B cell (primary cell): ENCODE measurements at regions of chr20 and their contacts with region 1.

Region 1: DNA sequence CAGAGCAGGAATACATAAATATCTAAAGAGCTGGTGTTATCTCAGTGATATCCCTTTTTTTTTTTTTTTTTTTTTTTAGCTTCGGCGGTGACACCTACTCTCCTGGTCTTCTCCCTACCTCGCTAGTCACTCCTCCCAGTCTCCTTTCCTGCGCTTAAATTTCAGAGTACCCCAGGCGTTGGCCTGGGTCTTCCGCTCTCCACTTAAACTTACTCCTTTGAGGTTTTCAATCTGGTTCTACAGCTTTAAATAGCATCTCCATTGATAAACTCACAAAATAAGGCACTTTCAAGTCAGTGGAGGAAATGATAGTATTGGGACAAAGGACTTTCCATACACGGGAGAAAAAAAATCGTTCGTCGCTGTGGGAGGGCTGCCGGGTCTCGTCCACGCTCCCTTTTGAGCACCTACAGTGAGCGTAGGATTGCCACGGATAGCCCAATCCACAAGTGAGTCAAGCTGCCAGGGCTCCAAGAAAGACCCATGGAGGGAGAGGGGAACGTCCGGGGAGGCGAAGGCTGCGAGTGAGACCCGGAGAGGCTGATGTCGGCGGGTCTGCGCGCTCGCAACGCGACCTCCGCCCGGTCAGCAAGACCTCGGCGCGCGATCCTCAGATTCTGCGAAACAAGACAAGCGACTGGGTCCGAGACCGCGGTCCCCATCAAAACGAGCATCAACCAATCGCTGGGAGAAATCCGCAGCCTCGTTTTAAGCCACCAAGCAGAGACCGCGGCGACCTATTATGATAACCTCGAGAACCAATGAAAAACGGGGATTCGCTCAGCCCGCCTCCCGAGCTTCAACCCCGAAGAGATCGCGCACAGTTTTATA is 672 bp upstream of the SRSF6 start:
- DNase-seq: peak; percentile 94
- ATAC-seq: peak; percentile 78
- H3K4me3 ChIP-seq: peak overlapping the region; percentile 84 to 98 (median 95)
- H3K4me3 Mint-ChIP-seq: peak overlapping the region; percentile 89
- H3K27ac ChIP-seq: peak overlapping the region; percentile 99 to 100
- H3K27ac Mint-ChIP-seq: peak overlapping the region; percentile 96
- H3K4me1 ChIP-seq: peaks cover 11 to 13% of the 10 kb centered on the region in 2 donors
- H3K4me1 Mint-ChIP-seq: peaks cover 27% of the 10 kb centered on the region
- H3K27me3 ChIP-seq: no peaks in the 10 kb centered on the region
- H3K27me3 Mint-ChIP-seq: peaks cover 12% of the 10 kb centered on the region
- CTCF ChIP-seq: no peak

Region 2: GRCh38 chr20:41617931-41618806 is 1838.9 kb before region 1 on chr20 and contains the start of gene CHD6:
- CTCF ChIA-PET with region 1: no interaction called
- POLR2A ChIA-PET with region 1: no interaction called
- intact Hi-C with region 1: loop called (anchors 5 kb)
- DNase-seq: peak; percentile 99
- ATAC-seq: peak; percentile 93
- H3K4me3 ChIP-seq: peak within 1 kb of the TSS; percentile 52 to 92 (median 72)
- H3K4me3 Mint-ChIP-seq: peak within 1 kb of the TSS; percentile 98
- H3K27ac ChIP-seq: peak within 1 kb of the TSS in 1 of 2 donors; percentile 57
- H3K27ac Mint-ChIP-seq: peak within 1 kb of the TSS; percentile 94
- H3K4me1 ChIP-seq: peaks cover 19 to 22% of the 10 kb centered on the region in 2 donors
- H3K4me1 Mint-ChIP-seq: peaks cover 42% of the 10 kb centered on the region
- H3K27me3 ChIP-seq: no peaks in the 10 kb centered on the region
- H3K27me3 Mint-ChIP-seq: no peaks in the 10 kb centered on the region
- CTCF ChIP-seq: no peak
- total RNA-seq, gene CHD6: 117 and 125 TPM in 2 replicates

Region 3: DNA sequence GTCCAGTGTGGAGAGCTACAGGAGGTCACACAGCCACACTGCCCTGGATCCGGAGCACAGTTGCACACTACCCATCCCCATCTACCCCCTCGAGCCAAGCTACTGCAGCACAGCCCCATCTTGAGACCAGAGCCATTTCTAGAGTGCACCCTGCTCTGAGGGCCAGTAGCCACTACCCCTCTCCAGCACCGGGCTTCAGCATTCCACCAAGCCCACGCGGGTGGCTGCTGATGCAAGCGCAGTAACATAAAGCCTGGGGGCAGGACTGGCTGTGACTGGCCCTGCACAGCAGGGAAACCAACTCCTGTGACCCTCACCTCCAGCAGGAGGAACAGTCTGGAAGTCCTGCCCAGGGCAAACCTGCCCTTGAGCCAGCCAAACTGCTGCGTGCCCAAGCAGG is 40.9 kb before region 1 on chr20:
- CTCF ChIA-PET with region 1: no interaction called
- POLR2A ChIA-PET with region 1: no interaction called
- intact Hi-C with region 1: no loop called
- DNase-seq: no peak
- ATAC-seq: no peak
- H3K4me3 ChIP-seq: no peak overlapping the region
- H3K4me3 Mint-ChIP-seq: no peak overlapping the region
- H3K27ac ChIP-seq: no peak overlapping the region
- H3K27ac Mint-ChIP-seq: no peak overlapping the region
- H3K4me1 ChIP-seq: no peaks in the 10 kb centered on the region
- H3K4me1 Mint-ChIP-seq: no peaks in the 10 kb centered on the region
- H3K27me3 ChIP-seq: peaks cover 0 to under 1% (median 0%) of the 10 kb centered on the region in 4 experiments
- H3K27me3 Mint-ChIP-seq: peaks cover 2% of the 10 kb centered on the region
- CTCF ChIP-seq: no peak

Region 4: DNA sequence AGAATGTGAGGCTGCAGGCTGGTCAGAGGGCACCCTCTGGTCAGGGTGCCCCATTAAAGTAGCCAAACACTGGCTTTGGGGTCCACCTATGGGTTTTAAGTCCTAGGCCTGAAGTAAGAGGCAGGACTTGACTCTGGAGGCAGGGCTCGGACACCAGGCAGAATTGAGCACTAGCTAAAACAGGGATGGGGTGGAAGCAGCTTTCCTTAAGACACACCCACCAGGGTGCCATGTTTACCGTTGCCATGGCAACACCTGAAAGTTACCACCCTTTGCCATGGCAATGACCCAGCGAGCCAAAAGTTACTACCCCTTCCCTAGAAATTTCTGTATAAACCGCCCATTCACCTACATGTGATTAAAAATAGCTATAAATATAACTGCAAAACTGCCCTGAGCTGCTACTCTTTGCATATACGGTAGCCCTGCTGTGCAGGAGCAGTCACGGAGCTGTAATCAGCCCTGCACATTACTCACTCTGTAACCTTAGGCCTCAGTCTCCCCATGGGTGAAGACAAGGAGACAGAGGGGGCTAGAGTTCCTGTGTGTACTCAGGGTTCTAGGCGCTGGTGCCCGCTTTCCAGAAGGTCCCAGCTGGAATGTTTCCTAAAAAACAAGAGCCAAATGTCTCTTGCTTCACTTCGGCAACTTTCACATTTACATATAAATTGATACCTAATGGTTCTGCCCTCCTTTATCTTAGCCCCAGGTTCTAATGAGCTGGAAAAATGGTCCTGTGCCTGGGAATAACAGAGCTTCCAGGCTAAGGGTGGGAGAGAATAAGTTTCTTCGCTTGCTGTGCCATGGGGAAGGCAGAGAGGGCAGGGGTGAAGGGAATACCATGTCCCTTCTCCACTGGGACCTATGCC is 26.5 kb before region 1 on chr20:
- CTCF ChIA-PET with region 1: no interaction called
- POLR2A ChIA-PET with region 1: no interaction called
- intact Hi-C with region 1: no loop called
- DNase-seq: no peak
- ATAC-seq: no peak
- H3K4me3 ChIP-seq: no peak overlapping the region
- H3K4me3 Mint-ChIP-seq: no peak overlapping the region
- H3K27ac ChIP-seq: no peak overlapping the region
- H3K27ac Mint-ChIP-seq: no peak overlapping the region
- H3K4me1 ChIP-seq: no peaks in the 10 kb centered on the region
- H3K4me1 Mint-ChIP-seq: no peaks in the 10 kb centered on the region
- H3K27me3 ChIP-seq: peaks cover 0 to 8% (median 0%) of the 10 kb centered on the region in 4 experiments
- H3K27me3 Mint-ChIP-seq: peaks cover 39% of the 10 kb centered on the region
- CTCF ChIP-seq: no peak

Region 5: DNA sequence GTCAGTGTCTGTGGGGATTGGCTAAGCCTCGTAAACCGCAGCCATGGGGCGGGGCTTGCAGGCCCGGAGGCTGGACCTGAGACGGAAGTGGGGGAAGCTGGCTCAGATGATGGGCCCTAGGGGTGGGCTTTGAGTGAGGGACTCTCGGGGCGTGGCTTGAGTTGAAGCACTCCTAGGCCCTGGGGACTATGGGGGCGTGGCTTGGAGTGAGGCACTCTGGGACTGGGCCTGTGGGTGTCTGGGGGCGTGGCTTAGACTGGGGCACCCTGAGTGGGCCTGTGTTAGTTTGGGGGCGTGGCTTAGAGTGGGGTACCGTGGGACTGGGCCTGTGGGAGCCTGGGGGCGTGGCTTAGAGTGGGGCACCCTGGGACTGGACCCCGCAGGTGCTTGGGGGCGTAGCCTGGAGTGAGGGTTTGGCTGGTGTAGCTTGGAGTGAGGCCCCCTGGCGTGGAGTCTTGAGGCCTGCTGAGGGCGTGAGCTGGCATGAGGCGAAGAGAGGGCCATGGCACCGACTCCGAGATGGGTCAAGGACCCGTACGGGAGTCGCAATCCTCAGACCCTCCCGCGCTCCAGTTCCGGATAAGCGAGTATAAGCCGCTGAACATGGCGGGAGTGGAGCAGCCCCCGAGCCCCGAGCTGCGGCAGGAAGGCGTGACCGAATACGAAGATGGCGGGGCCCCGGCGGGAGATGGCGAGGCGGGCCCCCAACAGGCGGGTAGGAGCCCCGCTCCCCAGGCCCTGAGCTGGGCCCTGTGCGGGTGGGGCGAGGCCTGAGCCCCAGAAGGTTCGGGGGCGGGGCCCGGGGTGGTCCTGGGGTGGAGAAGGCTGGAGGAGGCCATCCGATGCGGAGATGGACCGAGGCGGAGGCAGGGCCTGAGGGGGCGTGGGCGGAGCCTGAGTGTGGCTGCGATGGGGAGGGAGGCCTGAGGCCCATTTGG is 57.3 kb after region 1 on chr20:
- CTCF ChIA-PET with region 1: interaction called, 10 read pairs
- POLR2A ChIA-PET with region 1: interaction called, 4 read pairs
- intact Hi-C with region 1: loop called (anchors 1 kb)
- DNase-seq: peak; percentile 95
- ATAC-seq: peak; percentile 88
- H3K4me3 ChIP-seq: peak overlapping the region; percentile 44 to 71 (median 62)
- H3K4me3 Mint-ChIP-seq: peak overlapping the region; percentile 94
- H3K27ac ChIP-seq: peak overlapping the region; percentile 52 to 63
- H3K27ac Mint-ChIP-seq: peak overlapping the region; percentile 94
- H3K4me1 ChIP-seq: peaks cover 9 to 16% of the 10 kb centered on the region in 2 donors
- H3K4me1 Mint-ChIP-seq: peaks cover 24% of the 10 kb centered on the region
- H3K27me3 ChIP-seq: peaks cover 0 to 6% (median 2%) of the 10 kb centered on the region in 4 experiments
- H3K27me3 Mint-ChIP-seq: peaks cover 3% of the 10 kb centered on the region
- CTCF ChIP-seq: peak; percentile 34

Region 6: DNA sequence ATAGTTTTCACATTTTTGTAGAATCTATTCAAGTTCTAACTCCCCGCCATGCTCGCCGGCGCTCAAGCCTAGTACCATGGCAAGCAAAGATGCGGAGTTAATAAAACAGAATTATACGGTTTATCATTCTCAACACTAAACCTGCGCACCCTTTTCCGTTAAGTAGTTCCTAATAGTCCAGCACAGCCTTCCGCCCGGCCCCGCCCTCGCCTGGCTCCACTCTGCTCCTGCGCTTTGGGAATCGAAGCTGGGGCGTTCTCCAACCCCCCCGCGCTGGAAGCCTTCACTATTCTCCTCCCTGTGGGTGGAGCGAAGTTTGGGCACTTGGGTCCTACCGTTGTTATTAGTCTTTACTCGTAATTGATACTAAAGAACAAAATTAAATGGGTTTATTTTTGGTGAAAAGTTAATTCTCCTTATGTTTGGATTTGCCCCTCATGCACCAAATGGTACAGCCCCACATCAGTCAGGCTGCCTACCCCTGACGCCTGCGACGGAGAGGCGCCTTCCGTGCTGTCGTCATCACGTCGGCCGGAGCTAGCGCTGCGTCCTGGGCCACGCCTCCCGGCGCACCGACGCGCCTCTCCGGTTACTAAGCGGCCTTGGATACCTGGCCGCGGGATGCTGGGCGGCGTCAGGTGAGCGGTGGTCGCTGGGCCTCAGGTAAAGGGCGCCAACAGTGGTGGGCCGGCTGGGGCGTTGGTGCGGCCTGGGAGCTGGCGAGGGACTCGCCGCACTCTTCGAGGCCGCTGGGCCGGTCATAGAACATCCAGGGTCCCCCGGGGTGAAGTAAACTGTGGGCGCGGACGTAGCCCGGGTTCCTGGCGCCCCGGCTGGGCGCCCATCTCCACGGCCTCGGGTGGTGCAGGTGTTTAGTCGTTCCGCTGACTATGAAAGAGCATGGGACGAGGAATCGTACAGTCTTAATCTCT is 133.6 kb after region 1 on chr20 and contains the start of gene IFT52:
- CTCF ChIA-PET with region 1: no interaction called
- POLR2A ChIA-PET with region 1: interaction called, 12 read pairs
- intact Hi-C with region 1: loop called (anchors 1 kb)
- DNase-seq: peak; percentile 94
- ATAC-seq: peak; percentile 97
- H3K4me3 ChIP-seq: peak within 1 kb of the TSS; percentile 67 to 80 (median 75)
- H3K4me3 Mint-ChIP-seq: peak within 1 kb of the TSS; percentile 93
- H3K27ac ChIP-seq: peak within 1 kb of the TSS; percentile 66 to 92
- H3K27ac Mint-ChIP-seq: peak within 1 kb of the TSS; percentile 95
- H3K4me1 ChIP-seq: peaks cover 9 to 15% of the 10 kb centered on the region in 2 donors
- H3K4me1 Mint-ChIP-seq: peaks cover 18% of the 10 kb centered on the region
- H3K27me3 ChIP-seq: no peaks in the 10 kb centered on the region
- H3K27me3 Mint-ChIP-seq: peaks cover 5% of the 10 kb centered on the region
- CTCF ChIP-seq: no peak
- total RNA-seq, gene IFT52: 16.7 and 23.7 TPM in 2 replicates

Region 7: DNA sequence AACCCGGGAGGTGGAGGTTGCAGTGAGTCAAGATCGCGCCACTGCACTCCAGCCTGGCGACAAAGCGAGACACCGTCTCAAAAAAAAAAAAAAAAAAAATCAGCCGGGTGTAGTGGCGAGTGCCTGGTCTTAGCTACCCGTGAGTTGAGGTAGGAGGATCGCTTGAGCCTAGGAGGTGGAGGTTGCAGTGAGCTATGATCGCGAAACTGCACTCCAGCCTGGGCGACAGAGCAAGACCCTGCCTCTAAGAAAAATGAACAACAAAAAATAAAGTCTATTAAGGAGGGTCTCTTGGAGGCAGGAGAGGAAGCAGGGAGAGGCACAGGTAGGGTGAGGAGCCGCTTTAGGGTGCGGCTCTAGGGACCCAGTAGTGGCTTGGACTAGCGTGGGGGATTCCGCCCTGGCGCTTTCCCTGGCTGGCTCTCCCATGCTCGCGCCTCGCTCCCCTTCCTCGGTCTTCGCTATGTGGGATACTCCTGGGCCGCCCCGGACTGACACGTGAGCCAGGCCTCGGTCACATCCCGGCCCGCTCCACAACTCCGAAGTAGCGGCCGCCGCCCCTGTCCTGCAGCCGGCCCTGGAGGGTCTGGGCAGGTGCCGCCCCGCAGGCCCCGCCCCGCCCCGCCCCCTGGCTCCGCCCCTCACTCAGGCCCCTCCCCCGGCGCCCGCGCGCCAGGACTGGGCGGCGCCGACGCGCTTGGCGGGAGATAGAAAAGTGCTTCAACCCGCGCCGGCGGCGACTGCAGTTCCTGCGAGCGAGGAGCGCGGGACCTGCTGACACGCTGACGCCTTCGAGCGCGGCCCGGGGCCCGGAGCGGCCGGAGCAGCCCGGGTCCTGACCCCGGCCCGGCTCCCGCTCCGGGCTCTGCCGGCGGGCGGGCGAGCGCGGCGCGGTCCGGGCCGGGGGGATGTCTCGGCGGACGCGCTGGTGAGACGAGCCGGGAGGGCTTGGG is 209.6 kb after region 1 on chr20 and contains the start of gene MYBL2:
- CTCF ChIA-PET with region 1: interaction called, 4 read pairs
- POLR2A ChIA-PET with region 1: interaction called, 4 read pairs
- intact Hi-C with region 1: loop called (anchors 5 kb)
- DNase-seq: peak; percentile 89
- ATAC-seq: peak; percentile 78
- H3K4me3 ChIP-seq: peak within 1 kb of the TSS; percentile 48 to 71 (median 66)
- H3K4me3 Mint-ChIP-seq: peak within 1 kb of the TSS; percentile 91
- H3K27ac ChIP-seq: no peak within 1 kb of the TSS
- H3K27ac Mint-ChIP-seq: peak within 1 kb of the TSS; percentile 95
- H3K4me1 ChIP-seq: peaks cover 9 to 58% of the 10 kb centered on the region in 2 donors
- H3K4me1 Mint-ChIP-seq: peaks cover 43% of the 10 kb centered on the region
- H3K27me3 ChIP-seq: peaks cover 0 to 10% (median 0%) of the 10 kb centered on the region in 4 experiments
- H3K27me3 Mint-ChIP-seq: no peaks in the 10 kb centered on the region
- CTCF ChIP-seq: no peak
- total RNA-seq, gene MYBL2: 35.8 and 37.9 TPM in 2 replicates

Region 8: DNA sequence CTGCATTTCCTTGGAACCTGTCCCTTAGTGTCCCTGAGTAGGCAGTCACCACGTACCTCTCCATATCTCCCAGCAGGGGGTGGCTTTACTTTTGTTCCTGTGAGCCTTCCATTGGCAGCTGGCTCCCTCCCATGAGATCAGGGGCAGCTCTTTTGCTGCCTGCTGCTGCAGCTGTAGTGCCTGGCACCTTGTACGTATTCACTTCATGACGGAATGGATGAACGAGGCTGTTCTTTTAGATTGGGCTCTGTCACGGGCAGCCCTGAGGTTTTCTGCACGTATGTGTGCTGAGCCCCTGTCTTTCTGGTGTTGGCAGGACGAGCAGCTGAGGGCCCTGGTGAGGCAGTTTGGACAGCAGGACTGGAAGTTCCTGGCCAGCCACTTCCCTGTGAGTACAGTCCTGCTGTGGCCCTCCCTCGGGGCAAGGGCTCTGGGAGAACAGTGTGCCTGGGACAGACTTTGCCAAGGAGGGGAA is 224.5 kb after region 1 on chr20:
- CTCF ChIA-PET with region 1: no interaction called
- POLR2A ChIA-PET with region 1: no interaction called
- intact Hi-C with region 1: loop called (anchors 1 kb)
- DNase-seq: peak; percentile 83
- ATAC-seq: peak; percentile 37
- H3K4me3 ChIP-seq: peak overlapping the region; percentile 11 to 68 (median 43)
- H3K4me3 Mint-ChIP-seq: peak overlapping the region; percentile 70
- H3K27ac ChIP-seq: peak overlapping the region; percentile 98 to 99
- H3K27ac Mint-ChIP-seq: peak overlapping the region; percentile 97
- H3K4me1 ChIP-seq: peaks cover 38 to 60% of the 10 kb centered on the region in 2 donors
- H3K4me1 Mint-ChIP-seq: peaks cover 51% of the 10 kb centered on the region
- H3K27me3 ChIP-seq: no peaks in the 10 kb centered on the region
- H3K27me3 Mint-ChIP-seq: no peaks in the 10 kb centered on the region
- CTCF ChIP-seq: peak; percentile 51

Region 9: GRCh38 chr20:44310664-44311639 is 853.9 kb after region 1 on chr20 and contains the start of gene FITM2:
- CTCF ChIA-PET with region 1: no interaction called
- POLR2A ChIA-PET with region 1: interaction called, 3 read pairs
- intact Hi-C with region 1: loop called (anchors 5 kb)
- DNase-seq: peak; percentile 98
- ATAC-seq: peak; percentile 97
- H3K4me3 ChIP-seq: peak within 1 kb of the TSS; percentile 62 to 96 (median 95)
- H3K4me3 Mint-ChIP-seq: peak within 1 kb of the TSS; percentile 95
- H3K27ac ChIP-seq: peak within 1 kb of the TSS in 1 of 2 donors; percentile 22
- H3K27ac Mint-ChIP-seq: peak within 1 kb of the TSS; percentile 96
- H3K4me1 ChIP-seq: peaks cover 10 to 16% of the 10 kb centered on the region in 2 donors
- H3K4me1 Mint-ChIP-seq: peaks cover 22% of the 10 kb centered on the region
- H3K27me3 ChIP-seq: no peaks in the 10 kb centered on the region
- H3K27me3 Mint-ChIP-seq: peaks cover 5% of the 10 kb centered on the region
- CTCF ChIP-seq: peak; percentile 97
- total RNA-seq, gene FITM2: 4.0 and 4.3 TPM in 2 replicates